Panc1 (cell line): ENCODE measurements at regions of chr10 and their contacts with region 1.

Region 1: GRCh38 chr10:42816917-42817316 is 34.3 kb downstream of the BMS1 start:
- DNase-seq: no peak
- ATAC-seq: no peak
- H3K4me3 ChIP-seq: no peak overlapping the region
- H3K27ac ChIP-seq: no peak overlapping the region
- H3K4me1 ChIP-seq: no peaks in the 10 kb centered on the region
- H3K27me3 ChIP-seq: no peaks in the 10 kb centered on the region
- CTCF ChIP-seq: no peak

Region 2: DNA sequence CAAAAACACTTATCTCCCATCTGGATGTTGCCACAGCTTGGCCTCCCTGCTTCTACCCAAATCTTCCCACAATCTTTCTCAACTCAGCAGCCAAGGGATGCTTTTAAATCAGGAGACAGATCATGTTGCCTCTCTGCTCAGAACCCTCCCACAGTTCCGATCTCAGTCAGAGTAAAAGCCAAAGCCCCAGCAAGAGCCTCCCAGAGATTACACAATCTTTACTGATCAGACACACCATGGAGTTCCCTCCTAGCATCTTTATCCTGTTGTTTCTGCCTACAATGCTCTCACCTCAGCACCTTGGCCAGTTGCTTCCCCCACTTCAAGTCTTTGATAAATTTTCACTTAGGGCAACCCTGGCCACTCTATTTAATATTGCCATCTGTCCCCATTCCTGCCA is 136.7 kb before region 1 on chr10:
- CTCF ChIA-PET with region 1: no interaction called
- POLR2A ChIA-PET with region 1: no interaction called
- in situ Hi-C with region 1: no loop called
- intact Hi-C with region 1: no loop called
- DNase-seq: no peak
- ATAC-seq: no peak
- H3K4me3 ChIP-seq: no peak overlapping the region
- H3K27ac ChIP-seq: no peak overlapping the region
- H3K4me1 ChIP-seq: no peaks in the 10 kb centered on the region
- H3K27me3 ChIP-seq: no peaks in the 10 kb centered on the region
- CTCF ChIP-seq: no peak

Region 3: GRCh38 chr10:42783181-42783549 is 33.8 kb before region 1 on chr10:
- CTCF ChIA-PET with region 1: no interaction called
- POLR2A ChIA-PET with region 1: interaction called, 10 read pairs
- in situ Hi-C with region 1: no loop called
- intact Hi-C with region 1: no loop called
- DNase-seq: no peak
- ATAC-seq: peak; percentile 17; the same call in 1 of the 2 replicates
- H3K4me3 ChIP-seq: peak overlapping the region; percentile 82 to 96
- H3K27ac ChIP-seq: peak overlapping the region; percentile 97
- H3K4me1 ChIP-seq: peaks cover 4% of the 10 kb centered on the region; the same call in 1 of the 2 replicates
- H3K27me3 ChIP-seq: no peaks in the 10 kb centered on the region
- CTCF ChIP-seq: no peak

Region 4: DNA sequence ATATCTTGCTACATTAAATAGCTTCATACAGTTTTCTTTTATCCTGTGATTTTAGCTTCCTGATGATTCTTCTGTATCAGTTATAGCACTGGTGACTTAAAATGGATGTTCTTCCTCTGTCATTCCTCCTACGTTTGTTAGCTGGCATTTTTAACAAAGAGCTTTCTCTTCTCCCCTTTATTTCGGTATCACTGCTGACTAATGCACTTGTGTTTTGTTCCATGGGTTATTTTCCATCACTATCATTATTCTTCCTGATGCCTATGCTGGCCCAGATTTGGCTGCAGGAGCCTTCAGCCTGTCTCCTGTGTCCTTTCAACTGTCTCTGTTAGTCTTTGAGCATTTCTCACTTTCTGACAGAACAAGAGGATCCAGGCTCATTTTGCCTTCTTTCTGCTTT is 21.2 kb before region 1 on chr10:
- CTCF ChIA-PET with region 1: no interaction called
- POLR2A ChIA-PET with region 1: no interaction called
- in situ Hi-C with region 1: no loop called
- intact Hi-C with region 1: no loop called
- DNase-seq: no peak
- ATAC-seq: no peak
- H3K4me3 ChIP-seq: no peak overlapping the region
- H3K27ac ChIP-seq: no peak overlapping the region
- H3K4me1 ChIP-seq: no peaks in the 10 kb centered on the region
- H3K27me3 ChIP-seq: no peaks in the 10 kb centered on the region
- CTCF ChIP-seq: no peak

Region 5: DNA sequence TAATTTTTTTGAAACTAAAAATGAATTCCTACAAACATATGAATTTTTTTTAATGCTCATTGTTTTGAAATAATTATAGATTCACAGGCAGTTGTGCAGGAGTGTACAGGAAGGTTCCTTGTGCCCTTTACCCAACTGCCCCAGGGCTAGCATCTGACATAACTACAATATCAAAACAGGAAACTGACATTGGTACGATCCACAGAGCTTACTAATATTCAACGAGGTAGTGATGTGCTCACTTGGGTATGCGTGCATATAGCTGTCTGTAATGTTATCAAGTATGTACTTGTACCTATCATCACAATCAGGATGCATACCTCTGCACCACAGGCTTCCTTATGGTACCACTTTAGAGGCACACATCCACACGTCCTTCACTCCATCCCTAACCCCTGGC is 34.0 kb after region 1 on chr10:
- CTCF ChIA-PET with region 1: no interaction called
- POLR2A ChIA-PET with region 1: no interaction called
- in situ Hi-C with region 1: no loop called
- intact Hi-C with region 1: no loop called
- DNase-seq: no peak
- ATAC-seq: no peak
- H3K4me3 ChIP-seq: no peak overlapping the region
- H3K27ac ChIP-seq: no peak overlapping the region
- H3K4me1 ChIP-seq: no peaks in the 10 kb centered on the region
- H3K27me3 ChIP-seq: peaks cover 19% of the 10 kb centered on the region
- CTCF ChIP-seq: no peak

Region 6: GRCh38 chr10:43324876-43325275 is 508.0 kb after region 1 on chr10:
- CTCF ChIA-PET with region 1: no interaction called
- POLR2A ChIA-PET with region 1: no interaction called
- in situ Hi-C with region 1: no loop called
- intact Hi-C with region 1: no loop called
- DNase-seq: no peak
- ATAC-seq: no peak
- H3K4me3 ChIP-seq: no peak overlapping the region
- H3K27ac ChIP-seq: no peak overlapping the region
- H3K4me1 ChIP-seq: no peaks in the 10 kb centered on the region
- H3K27me3 ChIP-seq: peaks cover 3% of the 10 kb centered on the region; the same call in 1 of the 2 replicates
- CTCF ChIP-seq: no peak